Motor neuron (in vitro differentiated cells): ENCODE measurements at regions of chr3 and their contacts with region 1.

Region 1: DNA sequence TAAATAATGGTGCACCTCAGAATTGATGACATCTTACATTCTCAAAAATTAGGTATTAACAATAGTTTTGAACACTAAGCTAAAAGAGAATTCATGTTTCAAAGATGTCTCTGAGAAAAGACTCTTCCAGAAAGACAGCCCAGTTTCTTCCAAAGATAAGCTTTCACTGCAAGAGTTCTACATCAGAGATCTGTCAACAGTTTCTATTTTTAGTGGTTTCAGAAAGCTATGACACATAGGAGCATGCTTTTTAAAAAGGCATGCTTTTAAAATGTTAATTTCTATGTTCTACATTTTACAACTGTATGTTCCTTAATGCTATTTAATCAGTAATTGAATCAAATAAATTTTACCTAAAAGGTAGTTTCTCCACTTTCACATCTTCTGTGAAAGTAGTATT is 88.2 kb downstream of the PLOD2 start:
- ATAC-seq: peak in 2 of 8 experiments; percentile 63 to 81
- H3K4me3 ChIP-seq: no peak overlapping the region
- H3K27ac ChIP-seq: no peak overlapping the region
- H3K4me1 ChIP-seq: no peaks in the 10 kb centered on the region

Region 2: DNA sequence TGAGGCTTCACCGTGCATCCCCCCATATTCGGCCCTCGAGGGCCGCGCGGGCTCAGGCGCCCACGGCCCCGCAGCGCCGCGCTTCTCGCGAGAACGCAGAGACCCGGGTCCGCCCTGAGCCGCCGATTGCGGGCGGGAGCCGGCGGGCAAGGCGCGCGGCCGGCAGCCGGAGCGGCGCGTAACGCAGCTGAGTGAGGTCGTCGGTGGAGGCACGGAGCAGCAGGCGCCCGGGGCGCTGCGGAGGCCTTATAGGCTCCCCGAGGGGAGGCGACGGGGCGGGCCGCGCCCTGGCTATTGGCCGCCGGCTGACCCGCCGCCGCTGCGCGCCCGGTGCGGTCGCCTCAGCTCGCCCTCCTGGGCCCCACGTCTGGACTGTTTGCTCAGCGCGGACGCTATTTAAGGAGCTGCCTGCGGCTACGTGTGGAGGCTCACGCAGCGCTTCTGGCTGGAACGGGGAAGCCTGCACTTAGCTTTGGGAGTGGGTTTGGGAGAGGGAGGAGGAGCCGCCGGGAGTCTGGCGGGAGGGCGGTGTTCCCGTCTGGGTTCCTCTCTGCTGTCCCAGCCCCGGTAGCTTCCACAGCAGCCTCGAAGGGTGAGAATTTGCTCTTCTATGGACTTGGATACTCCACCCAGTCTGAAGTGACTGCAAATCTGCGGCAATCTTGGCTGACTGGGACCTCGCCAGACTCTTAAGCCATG is 88.3 kb after region 1 on chr3 and contains the start of gene PLOD2:
- in situ Hi-C with region 1: loop called in 2 of 9 experiments (anchors 10 to 25 kb)
- ATAC-seq: peak; percentile 72 to 90 (median 86)
- H3K4me3 ChIP-seq: peak within 1 kb of the TSS; percentile 55 to 74 (median 66)
- H3K27ac ChIP-seq: peak within 1 kb of the TSS; percentile 80 to 86
- H3K4me1 ChIP-seq: peaks cover 19 to 21% of the 10 kb centered on the region in 2 donors
- total RNA-seq, gene PLOD2: 15.9 to 105 (median 32.7) TPM

Region 3: GRCh38 chr3:146274833-146275232 is 202.0 kb after region 1 on chr3:
- in situ Hi-C with region 1: no loop called
- ATAC-seq: no peak
- H3K4me3 ChIP-seq: no peak overlapping the region
- H3K27ac ChIP-seq: no peak overlapping the region
- H3K4me1 ChIP-seq: no peaks in the 10 kb centered on the region